ENCODE measurements at regions of chr14 and their contacts with region 1.

Region 1: DNA sequence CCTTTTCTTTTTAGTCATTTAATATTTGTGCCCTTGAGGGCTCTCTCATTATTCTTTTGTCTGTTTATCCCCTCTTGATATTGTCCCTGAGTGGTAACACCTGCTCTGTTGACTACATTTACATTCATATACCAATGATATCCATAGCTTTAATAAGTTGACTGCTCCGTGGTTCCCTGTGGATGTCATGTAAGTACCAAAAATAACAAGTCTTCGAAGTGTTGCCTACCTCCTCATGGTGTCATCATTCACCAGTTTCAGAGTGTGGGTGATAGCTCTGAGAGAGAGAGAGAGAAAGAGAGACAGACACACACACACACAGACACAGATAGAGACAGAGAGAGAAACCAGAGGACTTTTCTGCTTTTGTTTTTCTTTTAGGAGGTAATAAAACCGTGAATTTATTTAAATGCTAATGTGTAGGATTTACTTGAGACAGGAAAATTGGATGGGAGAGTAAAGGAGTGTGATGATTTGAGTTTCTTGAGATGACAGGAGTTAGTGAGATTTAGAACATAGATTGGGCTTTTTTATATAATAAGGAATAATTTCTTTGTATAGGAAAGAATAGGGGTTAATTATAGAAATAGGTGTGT is 52.2 kb downstream of the PAPOLA start:
- DNase-seq: no peak
- ATAC-seq: no peak
- H3K4me3 ChIP-seq: no peak overlapping the region
- H3K27ac ChIP-seq: no peak overlapping the region
- H3K4me1 ChIP-seq: no peaks in the 10 kb centered on the region
- CTCF ChIP-seq: no peak
- EP300 ChIP-seq: no peak
- POLR2A ChIP-seq: no peak
- RAD21 ChIP-seq: no peak

Region 2: DNA sequence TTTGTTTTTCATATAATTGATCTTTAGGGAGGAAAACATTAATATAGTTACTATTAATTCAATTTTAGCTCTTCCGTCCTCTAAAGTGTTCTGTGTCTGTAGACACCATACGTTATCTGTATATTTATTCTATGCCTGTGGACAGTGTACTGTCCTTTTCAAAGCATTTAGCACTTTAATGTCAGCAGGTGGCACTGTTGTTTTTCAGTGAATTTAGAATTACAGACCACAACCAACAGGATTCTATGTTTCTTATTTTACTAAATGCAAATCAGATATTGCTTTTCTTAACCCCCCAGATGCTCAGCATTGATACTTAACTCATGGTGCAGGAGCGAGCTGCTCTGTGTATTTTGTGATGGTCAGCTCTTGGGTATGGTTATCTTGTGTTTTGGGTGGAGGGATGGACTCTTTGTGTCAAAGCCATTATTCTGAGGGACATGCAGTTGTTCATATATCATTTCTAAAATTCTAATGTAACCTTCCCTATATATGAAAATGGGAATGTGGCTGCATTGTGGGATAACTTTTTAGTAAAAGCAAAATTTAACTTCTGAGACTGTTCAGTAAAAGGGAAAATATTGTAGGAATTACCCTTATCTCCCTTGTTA is 13.0 kb after region 1 on chr14:
- CTCF ChIA-PET with region 1: interaction called, 26 read pairs
- POLR2A ChIA-PET with region 1: no interaction called
- DNase-seq: peak; percentile 31 to 36
- ATAC-seq: peak; percentile 91 to 93
- H3K4me3 ChIP-seq: no peak overlapping the region
- H3K27ac ChIP-seq: no peak overlapping the region
- H3K4me1 ChIP-seq: peaks cover 3% of the 10 kb centered on the region; the same call in 1 of the 3 replicates
- CTCF ChIP-seq: peak; percentile 72
- EP300 ChIP-seq: no peak
- POLR2A ChIP-seq: no peak
- RAD21 ChIP-seq: peak; percentile 42 to 47; a peak in 4 of 5 replicates

Region 3: GRCh38 chr14:96584199-96584906 is 29.9 kb after region 1 on chr14:
- CTCF ChIA-PET with region 1: no interaction called
- POLR2A ChIA-PET with region 1: no interaction called
- DNase-seq: peak; percentile 57 to 62
- ATAC-seq: peak; percentile 76 to 93
- H3K4me3 ChIP-seq: no peak overlapping the region
- H3K27ac ChIP-seq: no peak overlapping the region
- H3K4me1 ChIP-seq: no peaks in the 10 kb centered on the region
- CTCF ChIP-seq: peak; percentile 61
- EP300 ChIP-seq: no peak
- POLR2A ChIP-seq: no peak
- RAD21 ChIP-seq: peak; percentile 86 to 88

Measured in A549 (cell line).